ENCODE measurements at regions of chr14 and their contacts with region 1.

Region 1: DNA sequence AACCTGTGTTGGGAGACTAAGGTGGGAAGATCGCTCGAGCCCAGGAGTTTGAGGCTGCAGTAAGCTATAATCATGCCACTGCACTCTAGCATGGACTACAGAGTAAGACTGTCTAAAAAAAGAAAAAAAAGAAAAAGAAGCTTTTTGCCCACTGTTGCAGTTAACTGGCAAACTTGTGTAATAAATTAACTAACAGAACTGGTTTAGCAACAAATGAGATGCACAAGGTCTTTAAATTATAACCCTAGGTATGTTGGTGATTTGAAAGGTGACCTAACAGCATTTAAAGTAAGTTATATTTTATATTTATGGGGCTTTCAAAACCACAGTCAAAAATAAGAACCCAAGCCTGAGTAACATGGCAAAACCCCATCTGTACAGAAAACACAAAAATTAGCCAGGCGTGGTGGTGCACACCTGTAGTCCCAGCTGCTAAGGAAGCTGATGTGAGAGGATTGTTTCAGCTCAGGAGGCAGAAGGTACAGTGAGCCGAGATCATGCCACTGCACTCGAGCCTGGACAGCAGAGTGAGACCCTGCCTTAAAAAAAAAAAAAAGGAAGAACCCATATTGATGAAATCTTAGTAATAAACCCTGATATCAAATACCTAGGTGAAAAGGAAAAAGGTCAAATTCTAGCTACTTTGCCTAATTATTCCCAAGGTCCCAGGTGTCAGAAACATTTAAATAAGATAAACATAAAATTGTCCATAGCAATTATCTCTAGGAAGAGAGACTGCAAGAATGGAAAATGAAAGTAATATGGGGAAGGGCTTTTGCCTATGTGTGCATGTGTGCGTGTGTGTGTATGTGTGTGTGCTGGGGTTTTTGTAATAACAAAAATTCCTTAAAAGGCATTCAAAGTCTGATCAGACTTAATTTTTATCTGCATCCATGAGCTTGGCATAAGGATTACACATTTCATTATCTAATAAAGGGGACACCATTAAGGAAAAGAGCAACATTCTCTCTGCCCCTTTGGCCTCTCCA is 15.4 kb downstream of the SYNE2 start:
- DNase-seq: peak; percentile 34
- H3K4me3 Mint-ChIP-seq: no peak overlapping the region
- H3K27ac Mint-ChIP-seq: no peak overlapping the region
- H3K4me1 Mint-ChIP-seq: peaks cover 63% of the 10 kb centered on the region
- H3K27me3 Mint-ChIP-seq: no peaks in the 10 kb centered on the region

Region 2: GRCh38 chr14:63910583-63911363 is 42.5 kb after region 1 on chr14:
- CTCF ChIA-PET with region 1: interaction called, 3 read pairs
- intact Hi-C with region 1: loop called (anchors 1 kb)
- DNase-seq: peak; percentile 54
- H3K4me3 Mint-ChIP-seq: peak overlapping the region; percentile 0
- H3K27ac Mint-ChIP-seq: peak overlapping the region; percentile 37
- H3K4me1 Mint-ChIP-seq: peaks cover 46% of the 10 kb centered on the region
- H3K27me3 Mint-ChIP-seq: no peaks in the 10 kb centered on the region

Region 3: GRCh38 chr14:63933110-63933509 is 64.9 kb after region 1 on chr14:
- CTCF ChIA-PET with region 1: interaction called, 5 read pairs
- intact Hi-C with region 1: loop called (anchors 1 kb)
- DNase-seq: peak; percentile 8
- H3K4me3 Mint-ChIP-seq: no peak overlapping the region
- H3K27ac Mint-ChIP-seq: peak overlapping the region; percentile 2
- H3K4me1 Mint-ChIP-seq: peaks cover 19% of the 10 kb centered on the region
- H3K27me3 Mint-ChIP-seq: no peaks in the 10 kb centered on the region

Region 4: DNA sequence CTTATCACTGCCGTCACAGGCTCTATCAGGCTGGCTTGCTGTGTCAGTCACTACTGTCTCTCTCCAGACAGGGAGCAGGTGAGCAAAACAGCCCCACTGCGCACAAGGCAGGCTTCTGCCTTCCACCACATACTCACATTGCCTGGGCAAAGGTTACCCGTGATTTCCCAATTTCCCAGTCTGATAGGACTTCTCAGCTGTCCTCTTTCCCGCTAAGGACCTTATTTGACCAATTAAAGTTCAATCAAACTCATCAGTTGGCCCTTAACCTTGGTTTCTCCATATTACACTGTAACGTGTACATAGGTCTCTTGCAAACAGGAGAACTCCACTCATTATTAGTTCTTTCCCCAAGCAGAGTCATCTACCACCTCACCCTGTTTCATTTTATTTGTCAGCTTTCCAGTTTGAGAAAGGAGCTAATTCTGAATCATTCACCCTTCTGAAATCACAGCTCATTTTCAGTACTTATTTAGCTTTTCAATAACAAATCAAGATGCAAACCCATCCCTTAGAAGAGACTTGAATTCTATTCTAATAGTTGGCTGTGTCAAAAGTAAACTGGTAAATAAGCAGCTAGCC is 255.1 kb after region 1 on chr14:
- CTCF ChIA-PET with region 1: no interaction called
- intact Hi-C with region 1: loop called (anchors 1 kb)
- DNase-seq: no peak
- H3K4me3 Mint-ChIP-seq: no peak overlapping the region
- H3K27ac Mint-ChIP-seq: no peak overlapping the region
- H3K4me1 Mint-ChIP-seq: peaks cover 9% of the 10 kb centered on the region
- H3K27me3 Mint-ChIP-seq: no peaks in the 10 kb centered on the region

Region 5: GRCh38 chr14:64329149-64329548 is 460.9 kb after region 1 on chr14:
- CTCF ChIA-PET with region 1: no interaction called
- intact Hi-C with region 1: no loop called
- DNase-seq: no peak
- H3K4me3 Mint-ChIP-seq: no peak overlapping the region
- H3K27ac Mint-ChIP-seq: no peak overlapping the region
- H3K4me1 Mint-ChIP-seq: no peaks in the 10 kb centered on the region
- H3K27me3 Mint-ChIP-seq: peaks cover 3% of the 10 kb centered on the region

Region 6: GRCh38 chr14:65302571-65303189 is 1434.5 kb after region 1 on chr14:
- CTCF ChIA-PET with region 1: no interaction called
- intact Hi-C with region 1: loop called (anchors 10 kb)
- DNase-seq: peak; percentile 82
- H3K4me3 Mint-ChIP-seq: peak overlapping the region; percentile 23
- H3K27ac Mint-ChIP-seq: peak overlapping the region; percentile 95
- H3K4me1 Mint-ChIP-seq: peaks cover 61% of the 10 kb centered on the region
- H3K27me3 Mint-ChIP-seq: no peaks in the 10 kb centered on the region